ENCODE measurements at regions of chr6 and their contacts with region 1.

Region 1: GRCh38 chr6:146905181-146905704 is 299.0 kb upstream of the STXBP5 start:
- DNase-seq: peak; percentile 18
- ATAC-seq: peak; percentile 61; the same call in 1 of the 2 replicates
- H3K4me3 ChIP-seq: no peak overlapping the region
- H3K27ac ChIP-seq: no peak overlapping the region
- H3K4me1 ChIP-seq: peaks cover 11 to 12% of the 10 kb centered on the region in 2 experiments; a peak in 3 of 4 replicates
- H3K27me3 ChIP-seq: no peaks in the 10 kb centered on the region
- CTCF ChIP-seq: no peak
- POLR2A ChIP-seq: no peak
- RAD21 ChIP-seq: no peak

Region 2: GRCh38 chr6:147222160-147222838 is 317.1 kb after region 1 on chr6:
- CTCF ChIA-PET with region 1: interaction called, 6 read pairs
- POLR2A ChIA-PET with region 1: no interaction called
- RAD21 ChIA-PET with region 1: no interaction called
- intact Hi-C with region 1: loop called (anchors 5 kb)
- DNase-seq: no peak
- ATAC-seq: peak; percentile 63; the same call in 1 of the 2 replicates
- H3K4me3 ChIP-seq: no peak overlapping the region
- H3K27ac ChIP-seq: no peak overlapping the region
- H3K4me1 ChIP-seq: no peaks in the 10 kb centered on the region
- H3K27me3 ChIP-seq: no peaks in the 10 kb centered on the region
- CTCF ChIP-seq: peak in 2 of 3 experiments; percentile 49 to 55; a peak in 4 of 6 replicates
- POLR2A ChIP-seq: no peak
- RAD21 ChIP-seq: peak; percentile 36

Region 3: GRCh38 chr6:147285087-147285855 is 380.0 kb after region 1 on chr6:
- CTCF ChIA-PET with region 1: interaction called, 3 read pairs
- POLR2A ChIA-PET with region 1: no interaction called
- RAD21 ChIA-PET with region 1: no interaction called
- intact Hi-C with region 1: loop called (anchors 1 kb)
- DNase-seq: peak; percentile 34
- ATAC-seq: peak; percentile 50; the same call in 1 of the 2 replicates
- H3K4me3 ChIP-seq: no peak overlapping the region
- H3K27ac ChIP-seq: no peak overlapping the region
- H3K4me1 ChIP-seq: peaks cover 2 to 10% of the 10 kb centered on the region in 2 experiments; a peak in 2 of 4 replicates
- H3K27me3 ChIP-seq: no peaks in the 10 kb centered on the region
- CTCF ChIP-seq: peak; percentile 30 to 61 (median 48); a peak in 4 of 6 replicates
- POLR2A ChIP-seq: no peak
- RAD21 ChIP-seq: peak; percentile 62

Region 4: DNA sequence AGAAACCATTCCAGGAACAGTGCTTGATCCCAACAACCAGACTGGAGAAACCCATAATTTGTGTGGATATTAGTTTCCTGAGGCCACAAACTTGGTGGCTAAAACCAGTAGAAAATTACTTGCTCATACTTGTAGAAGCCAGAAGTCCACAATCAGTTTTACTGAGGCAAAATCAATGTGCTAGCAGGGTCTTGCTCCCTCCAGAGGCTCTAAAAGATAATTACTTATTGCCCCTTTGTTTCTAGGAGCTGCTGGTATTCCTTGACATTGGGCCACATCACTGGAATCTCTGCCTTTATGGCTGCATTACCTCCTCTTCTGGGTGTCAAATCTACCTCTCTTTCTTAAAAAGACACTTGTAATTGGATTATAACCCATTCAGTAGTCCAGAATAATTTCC is 461.0 kb after region 1 on chr6:
- CTCF ChIA-PET with region 1: no interaction called
- POLR2A ChIA-PET with region 1: no interaction called
- RAD21 ChIA-PET with region 1: no interaction called
- intact Hi-C with region 1: loop called (anchors 10 kb)
- DNase-seq: no peak
- ATAC-seq: no peak
- H3K4me3 ChIP-seq: no peak overlapping the region
- H3K27ac ChIP-seq: no peak overlapping the region
- H3K4me1 ChIP-seq: no peaks in the 10 kb centered on the region
- H3K27me3 ChIP-seq: no peaks in the 10 kb centered on the region
- CTCF ChIP-seq: no peak
- POLR2A ChIP-seq: no peak
- RAD21 ChIP-seq: peak; percentile 28

Region 5: DNA sequence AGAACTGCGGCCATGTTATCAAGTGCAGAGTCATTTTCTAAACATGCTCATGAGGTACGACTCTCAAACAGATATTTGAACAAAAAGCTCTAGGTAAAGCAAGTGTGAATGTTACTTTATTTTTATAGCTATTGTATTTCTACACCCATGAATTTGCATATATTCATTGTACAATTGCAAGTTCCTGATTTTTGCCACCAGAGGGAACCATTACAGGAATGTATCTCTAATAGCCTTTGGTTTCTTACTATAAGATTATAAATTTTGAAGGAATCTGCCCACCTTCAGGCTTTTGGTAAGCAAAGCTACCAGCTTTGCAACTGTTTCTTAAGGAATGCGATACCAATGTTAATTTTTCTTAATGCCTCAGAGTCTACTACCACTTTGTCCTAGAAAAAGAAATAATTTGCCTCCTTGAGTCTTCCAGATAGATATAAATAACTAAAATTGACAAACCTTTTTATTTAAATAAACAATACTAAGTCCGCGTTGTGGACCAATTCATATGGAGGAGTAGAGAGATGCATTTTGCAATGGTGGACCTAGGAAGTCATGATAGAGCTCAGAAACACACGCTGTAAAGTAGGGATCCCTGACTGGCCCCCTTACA is 477.8 kb after region 1 on chr6:
- CTCF ChIA-PET with region 1: interaction called, 26 read pairs
- POLR2A ChIA-PET with region 1: no interaction called
- RAD21 ChIA-PET with region 1: no interaction called
- intact Hi-C with region 1: no loop called
- DNase-seq: peak; percentile 13
- ATAC-seq: peak; percentile 69
- H3K4me3 ChIP-seq: no peak overlapping the region
- H3K27ac ChIP-seq: no peak overlapping the region
- H3K4me1 ChIP-seq: no peaks in the 10 kb centered on the region
- H3K27me3 ChIP-seq: no peaks in the 10 kb centered on the region
- CTCF ChIP-seq: peak; percentile 37 to 71 (median 50); a peak in 5 of 6 replicates
- POLR2A ChIP-seq: no peak
- RAD21 ChIP-seq: peak; percentile 30

Measured in HCT116 (cell line).